Panc1 (cell line): ENCODE measurements at regions of chr19 and their contacts with region 1.

Region 1: DNA sequence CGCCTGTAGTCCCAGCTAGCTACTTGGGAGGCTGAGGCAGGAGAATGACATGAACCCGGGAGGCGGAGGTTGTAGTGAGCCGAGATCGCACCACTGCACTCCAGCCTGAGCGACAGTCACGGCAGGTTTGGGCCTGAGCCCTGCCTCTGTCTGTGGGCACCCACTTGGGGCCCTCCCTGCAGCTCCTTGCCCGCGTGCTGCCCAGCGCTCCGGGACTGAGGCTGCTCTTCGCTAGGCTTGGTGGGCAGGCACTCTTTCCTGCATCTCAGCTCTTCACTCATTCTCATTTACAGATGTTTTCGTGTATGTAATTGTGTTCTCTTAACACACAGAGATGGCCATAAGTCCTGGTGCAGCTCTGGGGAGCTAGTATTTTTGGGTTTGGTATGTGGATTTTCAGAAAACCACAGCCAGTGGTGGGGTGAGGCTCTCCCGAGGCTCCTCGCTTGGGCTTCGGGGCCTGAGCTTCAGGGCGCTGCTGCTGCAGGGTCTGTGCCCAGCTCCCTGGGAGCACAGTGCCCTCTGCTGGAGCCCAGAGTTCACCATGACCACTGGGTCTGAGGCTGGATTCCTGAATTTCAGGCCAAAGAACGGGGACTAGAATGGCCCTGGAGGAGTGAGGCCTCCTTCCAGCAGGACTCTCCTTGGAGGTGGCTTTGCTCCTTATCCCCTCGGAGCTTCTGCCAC is 15.2 kb downstream of the UPF1 start:
- DNase-seq: no peak
- ATAC-seq: peak; percentile 95
- H3K4me3 ChIP-seq: no peak overlapping the region
- H3K27ac ChIP-seq: no peak overlapping the region
- H3K4me1 ChIP-seq: no peaks in the 10 kb centered on the region
- H3K27me3 ChIP-seq: no peaks in the 10 kb centered on the region
- CTCF ChIP-seq: peak; percentile 88

Region 2: DNA sequence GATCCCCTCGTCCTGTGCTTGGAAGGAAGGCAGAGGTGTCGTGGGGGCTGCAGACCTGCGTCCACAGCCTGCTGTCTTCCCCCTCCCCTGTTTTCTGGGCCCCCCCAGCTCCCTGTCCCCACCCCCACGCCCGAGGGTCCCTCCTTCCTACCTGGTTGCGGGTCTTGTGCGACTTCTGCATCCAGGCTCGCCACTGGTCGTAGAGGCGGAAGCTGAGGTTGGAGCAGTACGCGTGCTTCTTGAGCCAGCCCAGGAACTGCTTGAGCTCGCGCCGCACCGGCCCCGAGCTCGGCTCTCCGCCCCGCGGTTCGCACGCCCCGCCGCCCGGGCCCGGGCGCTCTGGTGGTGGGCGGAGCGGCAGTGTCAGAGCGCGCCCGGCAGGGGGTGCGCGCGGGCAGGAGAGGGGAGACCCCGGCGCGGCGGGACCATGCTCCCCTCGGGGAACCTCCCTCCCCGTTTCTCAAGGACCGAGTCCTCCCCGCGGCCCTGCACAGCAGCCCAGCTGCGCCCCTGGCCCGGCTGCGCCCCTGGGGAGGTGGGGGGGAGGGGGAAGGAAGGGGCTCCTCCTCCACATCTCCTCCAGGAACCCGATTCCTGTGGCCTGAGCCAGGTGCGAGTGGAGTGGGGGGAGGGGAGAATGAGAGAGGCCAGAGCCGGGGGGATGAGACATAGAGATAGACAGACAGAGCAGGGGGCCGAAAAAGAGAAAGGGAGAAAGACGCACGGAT is 252.7 kb before region 1 on chr19:
- CTCF ChIA-PET with region 1: interaction called, 12 read pairs
- POLR2A ChIA-PET with region 1: no interaction called
- in situ Hi-C with region 1: no loop called
- intact Hi-C with region 1: loop called (anchors 5 kb)
- DNase-seq: no peak
- ATAC-seq: peak; percentile 48
- H3K4me3 ChIP-seq: peak overlapping the region; percentile 29 to 41
- H3K27ac ChIP-seq: no peak overlapping the region
- H3K4me1 ChIP-seq: no peaks in the 10 kb centered on the region
- H3K27me3 ChIP-seq: no peaks in the 10 kb centered on the region
- CTCF ChIP-seq: peak; percentile 93

Region 3: GRCh38 chr19:18607226-18608101 is 239.5 kb before region 1 on chr19:
- CTCF ChIA-PET with region 1: no interaction called
- POLR2A ChIA-PET with region 1: no interaction called
- in situ Hi-C with region 1: no loop called
- intact Hi-C with region 1: no loop called
- DNase-seq: no peak
- ATAC-seq: no peak
- H3K4me3 ChIP-seq: peak overlapping the region; percentile 27 to 39
- H3K27ac ChIP-seq: no peak overlapping the region
- H3K4me1 ChIP-seq: peaks cover 7% of the 10 kb centered on the region
- H3K27me3 ChIP-seq: peaks cover 2% of the 10 kb centered on the region
- CTCF ChIP-seq: no peak

Region 4: DNA sequence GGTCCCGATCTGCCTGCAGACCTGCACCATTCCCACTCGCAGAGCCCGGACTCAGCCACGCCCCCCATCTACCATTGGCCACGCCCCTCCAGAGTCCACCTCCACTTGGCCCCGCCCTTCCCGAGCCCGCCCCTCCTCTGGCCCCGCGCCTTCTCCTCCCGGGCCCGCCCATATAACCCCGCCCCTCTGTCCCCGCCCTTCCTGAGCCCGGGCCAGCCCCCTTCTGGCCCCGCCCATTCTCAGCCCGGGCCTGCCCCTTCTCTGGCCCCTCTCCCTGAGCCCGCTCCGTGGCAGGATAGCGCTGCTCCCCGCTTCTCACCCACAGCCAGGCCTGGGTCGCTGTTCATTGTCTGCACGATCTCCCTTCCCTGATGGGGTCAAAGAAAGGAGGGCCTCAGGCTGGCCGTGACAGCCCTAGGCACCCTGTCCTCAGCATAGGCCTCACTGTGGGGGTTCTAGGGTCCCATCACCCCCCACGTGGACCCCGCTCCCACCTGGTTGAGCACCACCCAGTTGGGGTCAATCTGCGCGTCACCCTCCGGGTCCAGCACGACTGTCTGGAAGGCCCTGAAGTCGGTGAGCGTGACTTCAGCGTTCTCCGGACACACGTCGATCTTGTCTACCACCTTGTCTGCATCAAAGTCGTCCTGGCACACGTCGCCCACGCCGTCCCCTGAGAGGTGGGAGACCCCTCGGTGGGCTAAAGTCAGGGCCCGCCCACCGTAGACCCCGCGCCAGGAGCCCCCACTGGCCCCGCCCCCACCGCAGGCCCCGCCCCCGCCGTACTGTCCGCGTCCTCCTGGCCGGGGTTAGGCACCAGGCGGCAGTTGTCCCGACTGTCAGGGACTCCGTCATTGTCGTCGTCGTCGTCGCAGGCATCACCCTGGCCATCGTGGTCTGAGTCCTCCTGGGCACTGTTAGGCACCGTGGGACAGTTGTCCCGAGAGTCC is 61.6 kb before region 1 on chr19:
- CTCF ChIA-PET with region 1: interaction called, 5 read pairs
- POLR2A ChIA-PET with region 1: no interaction called
- in situ Hi-C with region 1: no loop called
- intact Hi-C with region 1: loop called (anchors 10 kb)
- DNase-seq: no peak
- ATAC-seq: peak; percentile 71
- H3K4me3 ChIP-seq: peak overlapping the region; percentile 30 to 59
- H3K27ac ChIP-seq: no peak overlapping the region
- H3K4me1 ChIP-seq: no peaks in the 10 kb centered on the region
- H3K27me3 ChIP-seq: no peaks in the 10 kb centered on the region; the same call in 1 of the 2 replicates
- CTCF ChIP-seq: no peak

Region 5: GRCh38 chr19:18906605-18907519 is 59.9 kb after region 1 on chr19:
- CTCF ChIA-PET with region 1: no interaction called
- POLR2A ChIA-PET with region 1: no interaction called
- in situ Hi-C with region 1: no loop called
- intact Hi-C with region 1: no loop called
- DNase-seq: no peak
- ATAC-seq: no peak
- H3K4me3 ChIP-seq: no peak overlapping the region
- H3K27ac ChIP-seq: no peak overlapping the region
- H3K4me1 ChIP-seq: no peaks in the 10 kb centered on the region
- H3K27me3 ChIP-seq: no peaks in the 10 kb centered on the region
- CTCF ChIP-seq: no peak

Region 6: DNA sequence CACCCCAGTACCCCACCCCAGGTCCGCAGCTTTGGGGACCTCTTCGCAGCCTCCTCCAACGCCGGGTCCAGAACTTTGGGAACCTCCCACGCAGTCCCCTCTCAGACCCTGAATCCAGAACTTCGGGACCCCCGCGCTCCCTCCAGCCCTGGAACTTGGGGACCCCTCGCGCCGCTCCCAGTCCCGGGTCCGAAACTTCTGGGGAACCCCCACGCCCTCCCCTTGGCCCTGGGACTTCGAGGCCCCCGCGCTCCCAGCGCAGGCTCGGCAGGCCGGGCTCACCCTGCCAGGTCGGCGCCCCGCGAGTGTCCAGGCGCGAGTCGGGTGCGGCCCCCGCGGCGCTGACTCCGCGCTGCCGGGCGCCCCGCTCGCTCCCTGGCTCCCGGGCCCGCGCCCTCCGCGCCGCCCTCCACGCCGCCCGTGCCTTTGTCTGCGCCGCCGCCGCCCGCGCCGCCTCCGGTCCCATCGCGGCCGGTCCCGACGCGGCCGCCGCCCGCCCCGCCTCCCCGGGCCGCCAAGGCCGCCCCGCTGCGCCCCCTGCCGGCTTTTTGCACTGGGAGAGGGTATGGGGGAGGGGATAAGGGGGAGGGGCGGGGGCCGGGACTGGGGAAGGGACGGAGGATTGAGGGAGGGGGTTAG is 93.9 kb after region 1 on chr19 and contains the start of gene HOMER3:
- CTCF ChIA-PET with region 1: no interaction called
- POLR2A ChIA-PET with region 1: no interaction called
- in situ Hi-C with region 1: no loop called
- intact Hi-C with region 1: no loop called
- DNase-seq: no peak
- ATAC-seq: peak; percentile 89
- H3K4me3 ChIP-seq: peak within 1 kb of the TSS; percentile 69 to 74
- H3K27ac ChIP-seq: peak within 1 kb of the TSS; percentile 77
- H3K4me1 ChIP-seq: peaks cover 5% of the 10 kb centered on the region
- H3K27me3 ChIP-seq: no peaks in the 10 kb centered on the region
- CTCF ChIP-seq: peak; percentile 82; the same call in 1 of the 2 replicates
- total RNA-seq, gene HOMER3: 58.9 TPM